ENCODE measurements at regions of chr12 and their contacts with region 1.

Region 1: DNA sequence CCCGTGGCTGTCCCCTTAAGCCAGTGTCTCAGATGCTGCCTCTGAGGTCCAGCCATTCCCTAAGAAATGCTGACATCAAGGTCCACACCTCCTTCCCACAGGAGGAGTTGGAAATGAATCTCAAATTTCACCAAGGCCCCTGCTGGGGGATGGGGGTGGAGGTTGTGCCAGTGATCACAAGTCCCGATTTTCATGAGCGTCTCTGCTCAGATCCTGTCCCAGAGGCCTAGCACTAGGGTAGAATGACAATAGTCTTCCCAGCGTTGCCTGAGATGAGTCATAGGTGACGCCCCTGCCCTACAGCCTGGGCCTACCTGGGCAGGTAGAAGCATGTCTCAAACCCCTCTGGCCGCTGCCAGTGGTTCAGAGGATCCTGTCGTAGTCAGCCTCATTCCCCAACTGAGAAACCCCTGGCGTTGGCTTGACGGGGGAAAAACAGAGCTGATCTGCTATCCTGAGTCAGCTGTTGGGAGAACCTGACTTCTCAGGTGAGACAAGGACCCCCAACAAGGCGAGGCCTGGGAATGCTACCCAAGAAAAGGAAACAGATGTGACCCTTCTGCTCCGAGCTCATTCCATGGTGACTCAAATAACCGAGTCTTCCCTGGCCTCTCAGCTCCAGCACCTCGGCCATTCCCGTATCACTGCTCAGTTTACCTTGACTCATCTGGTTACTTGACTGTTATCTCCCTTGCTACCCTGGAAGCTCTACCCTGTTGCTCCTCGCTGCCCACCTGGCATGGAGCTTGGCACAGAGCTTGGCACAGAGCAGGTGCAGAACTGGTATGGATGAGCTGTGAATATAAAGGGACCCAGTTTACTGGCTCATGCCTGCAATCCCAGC is 21.8 kb upstream of the SPPL3 start:
- DNase-seq: peak; percentile 74 to 77
- H3K4me3 ChIP-seq: no peak overlapping the region
- H3K27ac ChIP-seq: peak overlapping the region; percentile 61
- H3K4me1 ChIP-seq: peaks cover 31% of the 10 kb centered on the region
- H3K27me3 ChIP-seq: no peaks in the 10 kb centered on the region
- CTCF ChIP-seq: no peak

Region 2: GRCh38 chr12:120725659-120726509 is 200.1 kb before region 1 on chr12 and contains the start of gene ACADS:
- CTCF ChIA-PET with region 1: no interaction called
- POLR2A ChIA-PET with region 1: no interaction called
- intact Hi-C with region 1: no loop called
- DNase-seq: peak; percentile 67 to 88
- H3K4me3 ChIP-seq: peak within 1 kb of the TSS; percentile 65
- H3K27ac ChIP-seq: no peak within 1 kb of the TSS
- H3K4me1 ChIP-seq: no peaks in the 10 kb centered on the region; the same call in 1 of the 2 replicates
- H3K27me3 ChIP-seq: no peaks in the 10 kb centered on the region
- CTCF ChIP-seq: no peak
- total RNA-seq, gene ACADS: 8.2 and 14.2 TPM in 2 replicates

Region 3: GRCh38 chr12:120775862-120776552 is 150.0 kb before region 1 on chr12:
- CTCF ChIA-PET with region 1: interaction called, 3 read pairs
- POLR2A ChIA-PET with region 1: interaction called, 11 read pairs
- intact Hi-C with region 1: no loop called
- DNase-seq: no peak
- H3K4me3 ChIP-seq: no peak overlapping the region
- H3K27ac ChIP-seq: no peak overlapping the region
- H3K4me1 ChIP-seq: no peaks in the 10 kb centered on the region
- H3K27me3 ChIP-seq: no peaks in the 10 kb centered on the region
- CTCF ChIP-seq: 0 out of 2 replicates have a peak, but pooled peaks have one; percentile 19

Region 4: DNA sequence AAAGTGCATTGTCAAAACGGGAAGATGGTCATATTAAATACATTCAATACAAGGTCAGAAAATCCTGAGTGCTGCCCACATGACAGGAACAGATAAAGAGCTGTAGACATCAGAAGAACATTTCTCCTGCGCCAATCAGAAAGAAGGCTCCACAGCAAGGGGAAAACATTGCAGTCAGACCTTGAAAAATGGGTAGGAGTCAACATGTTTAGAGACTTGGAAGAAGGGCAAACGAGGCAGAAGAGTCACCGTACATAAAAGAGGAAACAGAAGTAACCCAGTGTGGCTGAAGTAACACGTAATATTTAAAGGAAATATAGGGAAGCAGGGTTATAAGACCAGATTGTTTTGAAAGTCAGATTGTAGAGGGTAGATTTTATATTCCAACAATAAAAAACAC is 33.7 kb before region 1 on chr12:
- CTCF ChIA-PET with region 1: no interaction called
- POLR2A ChIA-PET with region 1: no interaction called
- intact Hi-C with region 1: no loop called
- DNase-seq: no peak
- H3K4me3 ChIP-seq: no peak overlapping the region
- H3K27ac ChIP-seq: no peak overlapping the region
- H3K4me1 ChIP-seq: no peaks in the 10 kb centered on the region
- H3K27me3 ChIP-seq: no peaks in the 10 kb centered on the region
- CTCF ChIP-seq: no peak

Region 5: GRCh38 chr12:120965534-120966091 is 39.7 kb after region 1 on chr12:
- CTCF ChIA-PET with region 1: no interaction called
- POLR2A ChIA-PET with region 1: interaction called, 24 read pairs
- intact Hi-C with region 1: no loop called
- DNase-seq: peak in 1 of 2 experiments; percentile 16
- H3K4me3 ChIP-seq: no peak overlapping the region
- H3K27ac ChIP-seq: no peak overlapping the region
- H3K4me1 ChIP-seq: peaks cover 11% of the 10 kb centered on the region
- H3K27me3 ChIP-seq: no peaks in the 10 kb centered on the region
- CTCF ChIP-seq: no peak

Measured in PC-9 (cell line).